ENCODE measurements at regions of chr17 and their contacts with region 1.

Region 1: GRCh38 chr17:55770148-55770870 is 19.5 kb downstream of the PCTP start:
- DNase-seq: peak; percentile 29
- H3K4me3 ChIP-seq: no peak overlapping the region
- H3K27ac ChIP-seq: peak overlapping the region; percentile 78
- H3K27me3 ChIP-seq: no peaks in the 10 kb centered on the region
- CTCF ChIP-seq: peak; percentile 61

Region 2: GRCh38 chr17:55533608-55534007 is 236.7 kb before region 1 on chr17:
- CTCF ChIA-PET with region 1: interaction called, 242 read pairs
- POLR2A ChIA-PET with region 1: no interaction called
- DNase-seq: no peak
- H3K4me3 ChIP-seq: no peak overlapping the region
- H3K27ac ChIP-seq: no peak overlapping the region
- H3K27me3 ChIP-seq: no peaks in the 10 kb centered on the region
- CTCF ChIP-seq: no peak

Region 3: GRCh38 chr17:55717898-55718735 is 52.2 kb before region 1 on chr17:
- CTCF ChIA-PET with region 1: interaction called, 21 read pairs
- POLR2A ChIA-PET with region 1: no interaction called
- DNase-seq: peak; percentile 48
- H3K4me3 ChIP-seq: no peak overlapping the region
- H3K27ac ChIP-seq: no peak overlapping the region
- H3K27me3 ChIP-seq: no peaks in the 10 kb centered on the region
- CTCF ChIP-seq: peak; percentile 80

Region 4: GRCh38 chr17:55735731-55736405 is 34.4 kb before region 1 on chr17:
- CTCF ChIA-PET with region 1: interaction called, 27 read pairs
- POLR2A ChIA-PET with region 1: no interaction called
- DNase-seq: no peak
- H3K4me3 ChIP-seq: no peak overlapping the region
- H3K27ac ChIP-seq: no peak overlapping the region
- H3K27me3 ChIP-seq: no peaks in the 10 kb centered on the region
- CTCF ChIP-seq: peak; percentile 79

Region 5: GRCh38 chr17:55783684-55784245 is 13.5 kb after region 1 on chr17:
- CTCF ChIA-PET with region 1: interaction called, 38 read pairs
- POLR2A ChIA-PET with region 1: no interaction called
- DNase-seq: no peak
- H3K4me3 ChIP-seq: no peak overlapping the region
- H3K27ac ChIP-seq: no peak overlapping the region
- H3K27me3 ChIP-seq: no peaks in the 10 kb centered on the region
- CTCF ChIP-seq: no peak